Mammary epithelial cell (primary cell): ENCODE measurements at regions of chr16 and their contacts with region 1.

Region 1: DNA sequence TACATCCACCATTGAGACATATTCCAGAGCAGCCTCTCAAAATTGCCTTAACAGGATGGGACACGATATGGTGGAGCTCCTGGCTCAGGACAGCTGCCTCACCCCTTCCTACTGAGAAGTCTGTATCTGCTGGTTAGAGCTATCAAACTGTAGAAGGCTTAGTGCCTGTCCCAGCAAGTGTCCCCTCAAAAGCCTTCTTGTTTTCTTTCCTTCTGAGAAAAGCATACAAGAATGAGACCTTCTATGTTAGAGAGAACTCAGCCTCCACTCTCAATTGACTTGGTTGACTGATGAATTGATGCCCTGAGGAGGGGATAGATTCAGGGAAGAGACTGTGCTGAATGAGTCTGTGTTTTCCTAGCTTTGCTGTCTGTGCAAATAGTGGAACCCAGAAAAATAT is 2020.9 kb downstream of the TP53TG3F start:
- DNase-seq: no peak
- H3K4me3 ChIP-seq: no peak overlapping the region
- H3K27ac ChIP-seq: no peak overlapping the region
- H3K4me1 ChIP-seq: no peaks in the 10 kb centered on the region
- H3K27me3 ChIP-seq: no peaks in the 10 kb centered on the region
- CTCF ChIP-seq: no peak

Region 2: DNA sequence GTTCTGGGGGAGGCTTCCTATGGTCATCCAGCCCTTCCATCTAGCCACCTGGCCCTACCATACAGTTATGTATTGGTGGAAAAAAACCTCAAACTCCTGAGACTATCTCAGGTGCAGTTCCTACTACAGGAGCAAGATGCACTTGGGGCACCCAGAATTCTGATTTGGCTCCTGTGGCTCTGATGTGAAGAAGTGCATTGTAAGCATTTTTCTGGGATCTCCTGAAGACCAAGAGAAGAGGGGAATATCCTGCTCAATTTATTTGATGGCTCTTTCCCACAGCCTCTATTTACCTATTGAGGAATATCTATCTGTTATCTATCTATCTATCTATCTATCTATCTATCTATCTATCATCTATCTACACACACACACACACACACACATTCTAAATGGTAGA is 39.5 kb before region 1 on chr16:
- CTCF ChIA-PET with region 1: no interaction called
- dilution Hi-C with region 1: loop called (anchors 5 kb)
- in situ Hi-C with region 1: no loop called
- intact Hi-C with region 1: no loop called
- DNase-seq: no peak
- H3K4me3 ChIP-seq: no peak overlapping the region
- H3K27ac ChIP-seq: no peak overlapping the region
- H3K4me1 ChIP-seq: no peaks in the 10 kb centered on the region
- H3K27me3 ChIP-seq: no peaks in the 10 kb centered on the region
- CTCF ChIP-seq: no peak

Region 3: GRCh38 chr16:35752773-35753558 is 272.6 kb after region 1 on chr16:
- CTCF ChIA-PET with region 1: no interaction called
- dilution Hi-C with region 1: no loop called
- in situ Hi-C with region 1: no loop called
- intact Hi-C with region 1: no loop called
- DNase-seq: no peak
- H3K4me3 ChIP-seq: no peak overlapping the region
- H3K27ac ChIP-seq: no peak overlapping the region
- H3K4me1 ChIP-seq: no peaks in the 10 kb centered on the region
- H3K27me3 ChIP-seq: no peaks in the 10 kb centered on the region
- CTCF ChIP-seq: no peak